ENCODE measurements at regions of chr1 and their contacts with region 1.

Region 1: DNA sequence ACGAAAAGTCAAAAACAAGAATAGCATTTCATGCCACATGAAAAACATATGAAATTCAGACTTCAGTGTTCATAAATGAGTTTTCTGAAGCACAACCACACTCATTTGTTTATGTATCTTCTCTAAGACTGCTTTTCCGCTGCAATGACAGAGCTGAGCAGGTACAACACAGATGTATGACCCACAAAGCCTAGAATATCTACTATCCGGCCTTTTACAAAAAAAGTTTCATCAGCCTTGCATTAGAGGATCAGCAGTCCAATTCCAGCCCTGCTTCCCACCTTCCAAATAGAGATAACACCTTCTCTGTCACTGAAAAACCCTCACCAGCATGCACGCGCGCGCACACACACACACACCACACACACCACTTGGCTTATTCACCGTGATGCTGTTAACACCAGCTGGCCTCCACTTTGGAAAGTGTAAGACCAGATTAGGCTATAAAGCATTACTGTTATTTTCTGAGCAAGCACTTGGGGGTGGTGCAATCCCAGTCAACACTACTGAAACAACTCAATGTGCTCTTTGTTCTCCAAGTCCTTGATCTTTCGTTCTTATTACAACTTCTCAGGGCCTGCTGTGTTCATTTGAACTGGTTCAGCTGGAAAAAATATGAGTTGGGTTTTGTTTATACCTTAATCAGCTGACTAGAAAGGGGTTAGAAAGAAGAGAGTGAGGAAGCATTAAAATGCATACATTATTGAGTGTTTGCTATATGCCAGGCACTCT is 90.0 kb downstream of the GLUL start:
- DNase-seq: peak; percentile 65
- H3K4me3 Mint-ChIP-seq: no peak overlapping the region
- H3K27ac Mint-ChIP-seq: peak overlapping the region; percentile 80
- H3K4me1 Mint-ChIP-seq: peaks cover 28% of the 10 kb centered on the region
- H3K27me3 Mint-ChIP-seq: no peaks in the 10 kb centered on the region

Region 2: GRCh38 chr1:182259229-182259872 is 42.3 kb before region 1 on chr1:
- CTCF ChIA-PET with region 1: no interaction called
- POLR2A ChIA-PET with region 1: no interaction called
- intact Hi-C with region 1: loop called (anchors 2 kb)
- DNase-seq: peak; percentile 82
- H3K4me3 Mint-ChIP-seq: no peak overlapping the region
- H3K27ac Mint-ChIP-seq: peak overlapping the region; percentile 88
- H3K4me1 Mint-ChIP-seq: peaks cover 28% of the 10 kb centered on the region
- H3K27me3 Mint-ChIP-seq: no peaks in the 10 kb centered on the region

Region 3: DNA sequence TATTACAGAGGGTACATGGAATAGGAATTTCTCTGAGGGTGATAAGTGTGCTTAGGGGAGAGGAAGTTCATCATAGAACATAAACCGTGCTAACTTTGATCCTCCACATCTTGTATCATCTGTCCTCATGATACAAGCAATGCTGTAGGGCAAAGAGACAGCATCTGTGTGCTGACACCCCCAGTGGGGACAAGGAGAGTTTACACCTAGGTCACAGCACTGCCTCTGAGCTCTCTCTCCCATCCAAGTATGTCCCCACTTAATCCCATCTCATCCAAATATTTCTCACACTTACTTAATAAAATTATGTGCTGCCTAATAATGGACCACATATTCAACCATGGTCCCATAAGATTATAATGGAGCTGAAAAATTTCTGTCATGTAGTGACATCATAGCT is 103.1 kb after region 1 on chr1:
- CTCF ChIA-PET with region 1: no interaction called
- POLR2A ChIA-PET with region 1: no interaction called
- intact Hi-C with region 1: no loop called
- DNase-seq: no peak
- H3K4me3 Mint-ChIP-seq: no peak overlapping the region
- H3K27ac Mint-ChIP-seq: no peak overlapping the region
- H3K4me1 Mint-ChIP-seq: no peaks in the 10 kb centered on the region
- H3K27me3 Mint-ChIP-seq: peaks cover 23% of the 10 kb centered on the region

Region 4: GRCh38 chr1:182430263-182431068 is 128.8 kb after region 1 on chr1:
- CTCF ChIA-PET with region 1: no interaction called
- POLR2A ChIA-PET with region 1: no interaction called
- intact Hi-C with region 1: no loop called
- DNase-seq: peak; percentile 62
- H3K4me3 Mint-ChIP-seq: no peak overlapping the region
- H3K27ac Mint-ChIP-seq: no peak overlapping the region
- H3K4me1 Mint-ChIP-seq: peaks cover 22% of the 10 kb centered on the region
- H3K27me3 Mint-ChIP-seq: no peaks in the 10 kb centered on the region

Measured in activated CD4-positive, alpha-beta memory T cell treated with anti-CD3 and anti-CD28 coated beads for 36 hours (primary cell).